Dendritic cell treated with granulocyte-macrophage colony-stimulating factor and Interleukin-4, amounts not matched to agents 40 ng/mL and 50 ng/mL, for 4 days (primary cell): ENCODE measurements at regions of chr1 and their contacts with region 1.

Region 1: GRCh38 chr1:35016406-35016805 is 15.3 kb downstream of the ZMYM6 start:
- H3K4me3 Mint-ChIP-seq: no peak overlapping the region
- H3K27ac Mint-ChIP-seq: no peak overlapping the region
- H3K4me1 Mint-ChIP-seq: no peaks in the 10 kb centered on the region
- H3K27me3 Mint-ChIP-seq: no peaks in the 10 kb centered on the region

Region 2: DNA sequence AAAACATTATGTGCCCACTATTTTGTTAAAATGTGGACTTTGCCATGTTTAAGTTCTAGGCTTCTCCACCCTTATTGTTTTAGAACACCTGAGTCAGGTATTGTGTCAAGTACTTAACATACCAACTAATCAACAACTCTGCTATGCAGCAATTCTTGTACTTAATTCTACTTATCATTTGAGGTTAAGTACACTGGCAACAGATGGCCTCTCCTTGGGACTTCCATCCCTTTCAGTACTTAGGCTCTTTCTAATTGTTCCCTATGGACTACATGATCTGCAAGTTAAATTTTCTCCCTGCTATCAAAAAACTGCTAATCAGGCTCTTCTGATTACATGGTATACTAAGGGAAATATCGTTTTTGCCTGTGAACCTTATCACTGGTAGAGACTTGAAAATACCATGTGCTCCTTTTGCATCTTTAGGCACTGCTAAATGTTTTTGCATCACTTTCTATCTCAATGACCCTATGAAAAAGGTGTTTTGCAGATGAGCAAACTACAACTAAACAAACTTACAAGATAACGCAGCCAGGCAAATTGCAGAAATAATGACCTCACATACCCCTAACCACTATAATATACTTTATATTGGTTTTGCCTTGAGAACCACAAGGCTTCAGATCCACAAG is 157.6 kb after region 1 on chr1:
- intact Hi-C with region 1: loop called (anchors 10 kb)
- H3K4me3 Mint-ChIP-seq: no peak overlapping the region
- H3K27ac Mint-ChIP-seq: no peak overlapping the region
- H3K4me1 Mint-ChIP-seq: no peaks in the 10 kb centered on the region
- H3K27me3 Mint-ChIP-seq: no peaks in the 10 kb centered on the region